Activated T-helper 1 cell treated with anti-CD3 and anti-CD28 coated beads, Interleukin-12 subunit alpha, Interleukin-12 subunit beta, Interleukin-2, Interleukin-4 antibody, amounts not matched to agents 30 ng/mL and 10 ng/mL and 1 ng/mL, durations not matched to agents 14 hours and 24 hours and 36 hours (primary cell): ENCODE measurements at regions of chr21 and their contacts with region 1.

Region 1: GRCh38 chr21:14737922-14738321 is 191.8 kb upstream of the SAMSN1 start:
- DNase-seq: peak; percentile 41
- H3K4me3 Mint-ChIP-seq: no peak overlapping the region
- H3K27ac Mint-ChIP-seq: peak overlapping the region; percentile 9
- H3K4me1 Mint-ChIP-seq: peaks cover 40% of the 10 kb centered on the region
- H3K27me3 Mint-ChIP-seq: no peaks in the 10 kb centered on the region

Region 2: DNA sequence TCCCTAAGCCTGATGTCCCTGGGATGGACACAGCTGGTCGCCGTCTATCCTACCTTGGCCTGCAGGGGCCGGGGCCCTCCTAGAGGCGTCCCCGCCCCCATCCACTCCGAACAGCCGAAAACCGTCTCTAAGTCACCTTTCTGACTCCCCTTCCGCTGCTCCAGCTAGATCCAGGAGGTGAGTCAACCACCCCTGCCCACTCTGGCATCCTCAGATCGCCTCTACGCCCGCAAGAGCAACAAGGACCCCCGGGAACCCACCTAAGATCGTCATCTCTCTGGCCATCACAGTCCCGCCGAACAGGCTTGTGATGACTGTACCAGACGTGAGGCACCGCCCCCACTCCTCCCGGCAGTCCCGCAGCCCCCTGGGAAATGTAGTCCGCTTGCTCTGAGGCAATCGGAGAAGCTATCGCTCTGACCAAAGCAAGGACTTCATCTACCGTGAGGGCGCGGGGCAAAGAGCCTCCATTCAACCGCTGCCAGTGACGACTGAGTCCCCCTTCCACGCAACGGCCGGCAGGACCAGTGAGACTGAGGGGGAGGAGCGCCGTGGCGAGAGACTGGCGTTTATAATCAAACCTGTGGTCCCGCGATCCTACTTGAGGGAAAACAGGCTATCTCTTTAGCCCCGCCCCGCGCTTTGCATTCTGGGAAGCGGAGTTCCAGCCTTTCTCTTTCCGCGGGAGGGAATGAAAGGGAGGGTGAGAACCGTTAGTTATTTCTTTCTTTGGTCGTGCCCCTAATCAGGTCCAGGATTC is 354.9 kb before region 1 on chr21 and contains the start of gene HSPA13:
- intact Hi-C with region 1: loop called (anchors 1 kb)
- DNase-seq: peak; percentile 99
- H3K4me3 Mint-ChIP-seq: peak within 1 kb of the TSS; percentile 100
- H3K27ac Mint-ChIP-seq: peak within 1 kb of the TSS; percentile 100
- H3K4me1 Mint-ChIP-seq: peaks cover 52% of the 10 kb centered on the region
- H3K27me3 Mint-ChIP-seq: peaks cover 2% of the 10 kb centered on the region
- total RNA-seq, gene HSPA13: 43.6 and 50.4 TPM in 2 replicates

Region 3: DNA sequence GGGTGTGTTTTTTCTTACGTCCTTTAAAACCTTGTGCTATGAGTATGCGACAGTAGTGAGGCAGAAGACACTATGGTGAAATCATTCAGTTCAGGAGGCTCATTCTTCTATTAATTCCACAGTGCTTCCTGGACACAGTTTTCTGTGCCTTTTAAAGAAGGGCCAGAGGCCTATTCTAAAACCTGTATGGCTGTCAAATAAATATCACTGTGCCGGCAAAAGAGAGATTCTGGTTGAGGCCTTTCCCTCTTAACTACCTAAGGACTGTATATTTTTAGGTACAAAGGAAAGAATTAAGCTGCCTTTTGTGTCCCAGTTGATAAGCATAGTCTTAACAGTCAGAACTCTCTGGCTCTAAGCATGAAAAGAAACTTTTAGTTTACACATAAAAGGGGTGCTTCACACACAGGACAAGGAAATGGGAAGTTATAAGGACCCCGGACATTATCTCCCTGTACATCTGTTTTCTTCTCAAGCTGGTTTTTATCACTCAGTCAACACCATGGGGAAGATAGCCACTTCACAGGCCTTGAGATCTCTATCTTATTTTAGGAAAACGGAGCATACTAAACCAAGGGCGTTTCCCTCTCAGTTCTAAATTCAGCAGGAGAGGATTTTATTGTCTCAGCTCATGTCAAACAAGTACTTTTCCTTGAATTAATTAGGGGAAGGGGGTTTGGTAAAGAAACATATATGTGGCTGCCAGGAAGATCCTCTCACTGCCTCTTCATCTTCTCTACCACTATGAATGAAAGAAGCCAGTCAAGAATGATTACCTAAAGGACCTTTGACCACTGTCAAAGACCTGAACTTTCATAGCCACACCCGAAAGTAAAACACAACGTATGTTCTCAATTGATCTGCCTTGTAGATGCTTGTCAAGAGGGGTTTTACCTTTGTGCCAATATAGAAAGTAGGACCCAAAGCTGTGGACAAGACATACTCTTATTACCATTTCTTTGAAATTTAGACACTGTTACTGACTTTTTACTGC is 283.6 kb before region 1 on chr21:
- intact Hi-C with region 1: loop called (anchors 2 kb)
- DNase-seq: no peak
- H3K4me3 Mint-ChIP-seq: peak overlapping the region; percentile 62
- H3K27ac Mint-ChIP-seq: peak overlapping the region; percentile 92
- H3K4me1 Mint-ChIP-seq: peaks cover 74% of the 10 kb centered on the region
- H3K27me3 Mint-ChIP-seq: no peaks in the 10 kb centered on the region

Region 4: GRCh38 chr21:14545906-14546480 is 191.9 kb before region 1 on chr21 and contains the start of gene SAMSN1:
- intact Hi-C with region 1: loop called (anchors 1 kb)
- DNase-seq: peak; percentile 73
- H3K4me3 Mint-ChIP-seq: peak within 1 kb of the TSS; percentile 98
- H3K27ac Mint-ChIP-seq: peak within 1 kb of the TSS; percentile 92
- H3K4me1 Mint-ChIP-seq: peaks cover 81% of the 10 kb centered on the region
- H3K27me3 Mint-ChIP-seq: no peaks in the 10 kb centered on the region
- total RNA-seq, gene SAMSN1: 115 and 119 TPM in 2 replicates

Region 5: DNA sequence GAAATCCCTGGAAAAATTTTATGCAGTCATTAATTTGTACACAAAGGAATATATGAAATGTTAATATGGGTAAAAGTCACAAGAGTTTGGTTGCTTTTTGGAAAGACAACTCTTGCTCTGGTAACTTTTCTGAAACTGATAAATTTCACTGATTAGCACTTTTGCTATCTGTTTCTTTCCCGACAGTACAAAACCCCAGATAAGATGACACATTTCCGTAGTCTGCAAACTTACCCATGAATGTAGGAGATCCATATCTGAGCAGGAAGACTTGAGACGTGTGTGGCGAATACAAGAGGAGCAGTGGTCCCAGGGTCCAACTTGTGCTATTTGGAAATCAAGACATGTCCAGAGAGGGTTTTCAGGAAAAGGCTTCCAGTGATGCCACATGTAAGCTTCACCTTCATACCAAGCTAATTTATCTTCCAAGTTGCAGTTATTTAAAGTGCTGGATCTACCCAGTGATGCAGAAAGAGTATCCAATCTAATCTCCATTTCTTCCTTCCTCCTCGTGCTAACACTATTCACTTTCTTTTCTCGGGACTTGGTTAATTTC is 155.9 kb before region 1 on chr21:
- intact Hi-C with region 1: loop called (anchors 2 kb)
- DNase-seq: no peak
- H3K4me3 Mint-ChIP-seq: peak overlapping the region; percentile 9
- H3K27ac Mint-ChIP-seq: peak overlapping the region; percentile 7
- H3K4me1 Mint-ChIP-seq: peaks cover 58% of the 10 kb centered on the region
- H3K27me3 Mint-ChIP-seq: no peaks in the 10 kb centered on the region

Region 6: GRCh38 chr21:14630556-14631069 is 107.3 kb before region 1 on chr21:
- intact Hi-C with region 1: loop called (anchors 5 kb)
- DNase-seq: no peak
- H3K4me3 Mint-ChIP-seq: no peak overlapping the region
- H3K27ac Mint-ChIP-seq: peak overlapping the region; percentile 72
- H3K4me1 Mint-ChIP-seq: peaks cover 14% of the 10 kb centered on the region
- H3K27me3 Mint-ChIP-seq: peaks cover 2% of the 10 kb centered on the region

Region 7: GRCh38 chr21:14722841-14723483 is 15.0 kb before region 1 on chr21:
- intact Hi-C with region 1: loop called (anchors 2 kb)
- DNase-seq: no peak
- H3K4me3 Mint-ChIP-seq: peak overlapping the region; percentile 4
- H3K27ac Mint-ChIP-seq: peak overlapping the region; percentile 29
- H3K4me1 Mint-ChIP-seq: peaks cover 35% of the 10 kb centered on the region
- H3K27me3 Mint-ChIP-seq: no peaks in the 10 kb centered on the region

Region 8: GRCh38 chr21:14762734-14763694 is 25.1 kb after region 1 on chr21:
- intact Hi-C with region 1: no loop called
- DNase-seq: no peak
- H3K4me3 Mint-ChIP-seq: no peak overlapping the region
- H3K27ac Mint-ChIP-seq: no peak overlapping the region
- H3K4me1 Mint-ChIP-seq: no peaks in the 10 kb centered on the region
- H3K27me3 Mint-ChIP-seq: peaks cover 2% of the 10 kb centered on the region